ENCODE measurements at regions of chr2 and their contacts with region 1.

Region 1: GRCh38 chr2:240638512-240639160 is 13.4 kb downstream of the GPR35 start:
- DNase-seq: peak in 3 of 5 donors; percentile 4 to 66 (median 37)
- H3K4me3 ChIP-seq: no peak overlapping the region
- H3K27ac ChIP-seq: no peak overlapping the region
- H3K4me1 ChIP-seq: no peaks in the 10 kb centered on the region
- H3K27me3 ChIP-seq: no peaks in the 10 kb centered on the region
- CTCF ChIP-seq: no peak
- EP300 ChIP-seq: no peak
- POLR2A ChIP-seq: no peak

Region 2: GRCh38 chr2:240107477-240107796 is 531.2 kb before region 1 on chr2:
- intact Hi-C with region 1: loop called in 1 of 4 experiments (anchors 10 kb)
- DNase-seq: no peak
- H3K4me3 ChIP-seq: no peak overlapping the region
- H3K27ac ChIP-seq: no peak overlapping the region
- H3K4me1 ChIP-seq: no peaks in the 10 kb centered on the region
- H3K27me3 ChIP-seq: no peaks in the 10 kb centered on the region
- CTCF ChIP-seq: no peak
- EP300 ChIP-seq: no peak
- POLR2A ChIP-seq: no peak

Region 3: GRCh38 chr2:241064008-241064801 is 425.6 kb after region 1 on chr2:
- intact Hi-C with region 1: no loop called
- DNase-seq: peak in 3 of 5 donors; percentile 19 to 46 (median 26)
- H3K4me3 ChIP-seq: no peak overlapping the region
- H3K27ac ChIP-seq: no peak overlapping the region
- H3K4me1 ChIP-seq: peaks cover 2% of the 10 kb centered on the region
- H3K27me3 ChIP-seq: no peaks in the 10 kb centered on the region
- CTCF ChIP-seq: no peak
- EP300 ChIP-seq: no peak
- POLR2A ChIP-seq: no peak